ENCODE measurements at regions of chr15 and their contacts with region 1.

Region 1: GRCh38 chr15:57527382-57528091 is 64.2 kb upstream of the MYZAP start:
- DNase-seq: peak; percentile 98
- H3K4me3 ChIP-seq: no peak overlapping the region
- H3K27ac ChIP-seq: no peak overlapping the region
- H3K4me1 ChIP-seq: peaks cover 19% of the 10 kb centered on the region
- H3K27me3 ChIP-seq: no peaks in the 10 kb centered on the region
- CTCF ChIP-seq: peak; percentile 75

Region 2: GRCh38 chr15:57340682-57341259 is 186.8 kb before region 1 on chr15:
- CTCF ChIA-PET with region 1: interaction called, 49 read pairs
- POLR2A ChIA-PET with region 1: no interaction called
- intact Hi-C with region 1: loop called (anchors 1 kb)
- DNase-seq: peak; percentile 68
- H3K4me3 ChIP-seq: no peak overlapping the region
- H3K27ac ChIP-seq: no peak overlapping the region
- H3K4me1 ChIP-seq: peaks cover 6% of the 10 kb centered on the region
- H3K27me3 ChIP-seq: no peaks in the 10 kb centered on the region
- CTCF ChIP-seq: peak; percentile 86

Region 3: DNA sequence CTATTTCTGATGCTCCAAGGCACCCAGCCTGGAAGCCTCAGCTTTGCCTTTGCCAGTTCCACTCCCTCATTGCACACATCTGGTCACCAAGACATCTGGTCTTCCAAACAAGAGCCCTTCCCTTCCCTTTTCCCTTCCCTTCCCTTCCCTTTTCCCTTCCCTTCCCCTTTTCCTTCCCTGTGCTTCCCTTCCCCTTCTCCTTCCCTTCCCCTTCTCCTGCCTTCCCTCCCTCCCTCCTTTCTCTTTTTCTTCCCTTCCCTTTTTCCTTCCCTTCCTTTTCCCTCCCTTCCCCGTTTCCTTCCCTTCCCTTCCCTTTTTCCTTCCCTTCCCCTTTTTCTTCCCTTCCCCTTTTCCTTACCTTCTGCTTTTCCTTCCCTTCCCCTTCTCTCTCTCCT is 153.7 kb before region 1 on chr15:
- CTCF ChIA-PET with region 1: interaction called, 10 read pairs
- POLR2A ChIA-PET with region 1: no interaction called
- intact Hi-C with region 1: no loop called
- DNase-seq: no peak
- H3K4me3 ChIP-seq: no peak overlapping the region
- H3K27ac ChIP-seq: no peak overlapping the region
- H3K4me1 ChIP-seq: no peaks in the 10 kb centered on the region
- H3K27me3 ChIP-seq: peaks cover 8% of the 10 kb centered on the region
- CTCF ChIP-seq: no peak

Region 4: GRCh38 chr15:57692709-57693108 is 165.2 kb after region 1 on chr15:
- CTCF ChIA-PET with region 1: no interaction called
- POLR2A ChIA-PET with region 1: no interaction called
- intact Hi-C with region 1: no loop called
- DNase-seq: peak; percentile 33
- H3K4me3 ChIP-seq: no peak overlapping the region
- H3K27ac ChIP-seq: peak overlapping the region; percentile 6
- H3K4me1 ChIP-seq: peaks cover 33% of the 10 kb centered on the region
- H3K27me3 ChIP-seq: no peaks in the 10 kb centered on the region
- CTCF ChIP-seq: no peak

Measured in A673 (cell line).